Heart left ventricle (tissue), 16 donors: ENCODE measurements at regions of chr11 and their contacts with region 1.

Region 1: DNA sequence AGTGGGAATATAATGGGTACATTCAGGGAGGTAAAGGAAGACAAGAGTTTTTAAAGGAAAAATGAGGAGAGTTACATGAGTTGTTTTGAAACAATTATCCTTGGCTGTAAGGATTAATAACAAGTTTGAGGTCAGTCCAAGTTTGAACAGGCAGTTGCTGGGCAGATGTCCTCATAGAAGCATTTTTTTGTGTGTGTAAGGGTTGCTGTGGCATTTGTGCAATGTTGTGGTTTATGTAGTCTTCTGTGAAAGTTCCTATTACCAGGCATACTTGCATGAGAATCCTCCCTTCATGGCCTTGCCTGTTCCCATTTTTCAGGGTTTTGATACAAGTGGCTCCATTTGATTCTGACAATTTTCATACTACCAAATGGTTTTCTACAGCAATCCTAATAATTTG is 400.2 kb downstream of the KCNA4 start:
- DNase-seq: no peak
- ATAC-seq: no peak
- H3K4me3 ChIP-seq: no peak overlapping the region
- H3K27ac ChIP-seq: no peak overlapping the region
- H3K4me1 ChIP-seq: no peaks in the 10 kb centered on the region
- H3K27me3 ChIP-seq: no peaks in the 10 kb centered on the region
- CTCF ChIP-seq: no peak
- POLR2A ChIP-seq: no peak

Region 2: DNA sequence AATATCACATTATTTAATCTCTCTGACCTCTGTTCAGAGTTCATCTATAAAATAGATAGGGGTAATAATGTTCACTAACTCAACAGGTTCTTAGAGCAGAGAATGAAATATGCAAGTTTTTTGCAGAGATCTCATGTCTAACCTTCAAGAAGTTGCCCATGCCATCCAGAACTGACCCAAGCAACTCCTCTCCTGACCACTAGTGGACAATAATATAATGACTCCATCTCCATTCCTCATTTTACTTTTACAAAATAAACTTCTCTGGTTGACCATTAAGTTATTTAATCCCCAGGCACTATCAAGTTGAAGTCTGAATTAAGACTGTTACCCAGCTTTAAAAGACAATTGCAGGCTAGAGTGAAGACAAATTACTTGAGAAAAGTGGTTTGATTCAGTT is 17.6 kb after region 1 on chr11:
- intact Hi-C with region 1: loop called in 1 of 10 experiments (anchors 2 kb)
- DNase-seq: no peak
- ATAC-seq: no peak
- H3K4me3 ChIP-seq: no peak overlapping the region
- H3K27ac ChIP-seq: no peak overlapping the region
- H3K4me1 ChIP-seq: no peaks in the 10 kb centered on the region
- H3K27me3 ChIP-seq: no peaks in the 10 kb centered on the region
- CTCF ChIP-seq: peak in 10 of 12 donors; percentile 8 to 44 (median 26)
- POLR2A ChIP-seq: no peak